ENCODE measurements at regions of chr3 and their contacts with region 1.

Region 1: DNA sequence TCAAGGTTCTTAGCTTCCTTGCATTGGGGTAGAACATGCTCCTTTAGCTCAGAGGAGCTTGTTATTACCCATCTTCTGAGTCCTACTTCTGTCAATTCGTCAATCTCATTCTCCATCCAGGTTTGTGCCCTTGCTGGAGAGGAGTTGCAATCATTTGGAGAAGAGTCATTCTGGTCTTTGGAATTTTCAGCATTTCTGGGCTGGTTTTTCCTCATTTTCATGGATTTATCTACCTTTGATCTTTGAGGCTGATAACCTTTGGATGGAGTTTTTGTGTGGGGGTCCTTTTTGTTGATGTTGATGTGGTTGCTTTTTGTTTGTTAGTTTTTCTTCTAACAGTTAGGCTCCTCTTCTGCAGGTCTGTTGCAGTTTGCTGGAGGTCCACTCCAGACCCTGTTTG is 5.2 kb downstream of the AADACL2 start:
- DNase-seq: no peak
- H3K4me3 ChIP-seq: no peak overlapping the region
- H3K27ac ChIP-seq: no peak overlapping the region
- H3K4me1 ChIP-seq: no peaks in the 10 kb centered on the region
- H3K27me3 ChIP-seq: no peaks in the 10 kb centered on the region
- CTCF ChIP-seq: no peak

Region 2: GRCh38 chr3:151686257-151686656 is 52.6 kb before region 1 on chr3:
- CTCF ChIA-PET with region 1: no interaction called
- dilution Hi-C with region 1: loop called (anchors 5 kb)
- in situ Hi-C with region 1: no loop called
- intact Hi-C with region 1: no loop called
- DNase-seq: peak; percentile 6
- H3K4me3 ChIP-seq: no peak overlapping the region
- H3K27ac ChIP-seq: no peak overlapping the region
- H3K4me1 ChIP-seq: no peaks in the 10 kb centered on the region
- H3K27me3 ChIP-seq: peaks cover 2% of the 10 kb centered on the region
- CTCF ChIP-seq: no peak

Region 3: GRCh38 chr3:151789844-151790501 is 51.1 kb after region 1 on chr3:
- CTCF ChIA-PET with region 1: no interaction called
- dilution Hi-C with region 1: loop called (anchors 5 kb)
- in situ Hi-C with region 1: no loop called
- intact Hi-C with region 1: no loop called
- DNase-seq: no peak
- H3K4me3 ChIP-seq: no peak overlapping the region
- H3K27ac ChIP-seq: no peak overlapping the region
- H3K4me1 ChIP-seq: no peaks in the 10 kb centered on the region
- H3K27me3 ChIP-seq: no peaks in the 10 kb centered on the region
- CTCF ChIP-seq: no peak